ENCODE measurements at regions of chr14 and their contacts with region 1.

Region 1: DNA sequence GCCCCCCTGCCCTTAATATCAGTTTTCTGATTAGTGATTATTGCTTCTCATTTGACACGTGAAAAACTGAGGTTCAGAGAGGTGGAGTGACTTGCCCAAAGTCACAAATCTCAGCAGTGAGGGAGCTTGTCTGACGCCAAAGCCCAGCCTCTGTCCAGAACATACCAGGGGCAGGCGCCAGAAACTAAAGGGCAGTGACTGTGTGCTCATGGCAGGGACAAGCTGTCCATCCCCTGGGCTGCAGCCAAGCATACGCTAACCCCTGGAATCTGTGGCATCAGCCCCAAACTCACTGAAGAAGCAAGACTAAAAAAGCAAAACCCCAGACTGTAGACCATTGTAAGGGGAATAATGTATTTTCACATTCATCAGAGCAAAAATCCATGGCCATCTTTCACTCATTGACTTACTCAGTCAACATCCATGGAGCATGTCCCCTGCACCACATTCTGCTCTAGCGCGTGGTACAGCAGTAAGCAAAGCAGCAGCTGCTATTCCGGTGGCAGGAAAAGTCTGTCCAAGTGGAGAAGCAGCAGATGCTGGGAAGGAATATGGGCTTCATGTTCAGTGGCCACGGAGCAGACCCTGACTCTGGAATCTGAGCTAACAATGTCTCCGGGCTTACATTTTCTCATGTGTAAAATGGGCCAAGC is 1.5 kb upstream of the SERPINA4 start:
- DNase-seq: no peak
- H3K4me3 ChIP-seq: no peak overlapping the region
- H3K4me3 Mint-ChIP-seq: no peak overlapping the region
- H3K27ac ChIP-seq: no peak overlapping the region
- H3K27ac Mint-ChIP-seq: no peak overlapping the region
- H3K4me1 ChIP-seq: no peaks in the 10 kb centered on the region
- H3K4me1 Mint-ChIP-seq: no peaks in the 10 kb centered on the region
- H3K27me3 ChIP-seq: no peaks in the 10 kb centered on the region
- H3K27me3 Mint-ChIP-seq: peaks cover 13 to 18% of the 10 kb centered on the region in 2 donors

Region 2: DNA sequence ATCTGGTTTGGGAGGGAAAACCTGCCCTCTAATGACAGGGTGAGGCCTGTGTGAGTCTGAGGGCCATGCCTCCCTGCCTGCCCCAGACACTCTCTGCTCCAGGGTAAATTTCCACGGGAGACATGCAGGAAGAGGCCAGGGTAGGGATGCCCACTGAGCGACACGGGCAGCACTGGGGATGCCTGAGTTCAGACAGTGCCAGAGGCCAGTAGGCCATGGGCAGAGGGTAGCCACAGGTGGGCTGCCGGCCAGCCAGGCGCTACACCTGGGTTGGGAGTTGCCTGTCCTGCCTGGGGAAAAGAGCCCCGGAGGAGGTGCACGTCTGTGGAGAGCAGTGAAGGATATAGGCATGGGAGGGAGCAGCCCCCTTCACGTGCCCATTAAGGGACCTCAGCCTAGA is 54.1 kb before region 1 on chr14:
- CTCF ChIA-PET with region 1: no interaction called
- POLR2A ChIA-PET with region 1: no interaction called
- intact Hi-C with region 1: no loop called
- DNase-seq: no peak
- H3K4me3 ChIP-seq: no peak overlapping the region
- H3K4me3 Mint-ChIP-seq: no peak overlapping the region
- H3K27ac ChIP-seq: no peak overlapping the region
- H3K27ac Mint-ChIP-seq: no peak overlapping the region
- H3K4me1 ChIP-seq: no peaks in the 10 kb centered on the region
- H3K4me1 Mint-ChIP-seq: no peaks in the 10 kb centered on the region
- H3K27me3 ChIP-seq: no peaks in the 10 kb centered on the region
- H3K27me3 Mint-ChIP-seq: peaks cover 9 to 18% of the 10 kb centered on the region in 2 donors

Region 3: DNA sequence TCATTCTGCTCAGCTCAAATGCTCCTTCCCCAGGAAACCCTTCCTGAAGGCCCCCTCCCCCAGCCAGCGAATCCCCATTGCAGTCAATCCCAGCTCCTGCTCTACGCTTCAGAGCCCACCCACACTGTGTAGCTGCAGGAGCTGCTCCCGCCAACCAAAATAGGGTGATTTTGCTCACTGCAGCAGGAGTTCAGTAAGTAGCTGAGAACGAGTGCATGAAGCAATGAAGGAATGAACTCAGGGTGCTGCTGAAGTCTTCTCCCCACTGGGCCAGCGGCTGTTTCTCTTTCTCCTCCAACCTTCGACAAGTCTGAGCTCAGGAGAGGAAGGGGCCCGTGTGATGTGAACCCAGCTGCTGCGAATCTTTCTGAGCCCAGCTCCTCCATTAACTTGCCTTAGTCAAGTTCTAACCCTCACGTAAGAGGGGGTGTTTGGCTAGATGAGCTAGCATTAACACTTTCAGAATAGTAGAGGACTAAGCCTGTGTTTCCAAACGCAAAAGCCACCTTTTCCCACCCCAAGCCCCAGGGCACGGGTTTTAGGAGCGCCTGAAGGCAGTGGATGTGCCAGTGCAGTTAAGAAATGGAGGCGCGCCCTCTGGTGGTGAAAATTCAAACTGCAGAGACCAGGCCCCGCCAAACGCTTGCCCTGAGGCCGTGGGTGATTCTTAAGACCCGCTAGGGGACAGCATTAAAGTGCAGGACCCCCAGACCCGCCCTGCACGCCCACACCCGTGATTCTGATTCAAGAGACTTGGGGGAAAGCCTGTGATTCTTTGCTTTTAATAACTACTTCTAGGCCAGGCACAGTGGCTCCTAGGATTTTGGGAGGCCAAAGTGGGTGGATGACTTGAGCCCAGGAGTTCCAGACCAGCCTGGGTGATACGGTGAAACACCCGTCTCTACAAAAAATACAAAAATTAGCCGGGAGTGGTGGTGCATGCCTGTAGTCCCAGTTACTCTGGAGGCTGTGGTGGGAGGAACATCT is 10.5 kb before region 1 on chr14:
- CTCF ChIA-PET with region 1: interaction called, 14 read pairs
- POLR2A ChIA-PET with region 1: no interaction called
- intact Hi-C with region 1: no loop called
- DNase-seq: peak in 4 of 5 donors; percentile 7 to 24 (median 20)
- H3K4me3 ChIP-seq: no peak overlapping the region
- H3K4me3 Mint-ChIP-seq: no peak overlapping the region
- H3K27ac ChIP-seq: no peak overlapping the region
- H3K27ac Mint-ChIP-seq: no peak overlapping the region
- H3K4me1 ChIP-seq: no peaks in the 10 kb centered on the region
- H3K4me1 Mint-ChIP-seq: no peaks in the 10 kb centered on the region
- H3K27me3 ChIP-seq: no peaks in the 10 kb centered on the region
- H3K27me3 Mint-ChIP-seq: peaks cover 5 to 16% of the 10 kb centered on the region in 2 donors

Measured in CD4-positive, alpha-beta memory T cell (primary cell).